Natural killer cell (primary cell): ENCODE measurements at regions of chr16 and their contacts with region 1.

Region 1: DNA sequence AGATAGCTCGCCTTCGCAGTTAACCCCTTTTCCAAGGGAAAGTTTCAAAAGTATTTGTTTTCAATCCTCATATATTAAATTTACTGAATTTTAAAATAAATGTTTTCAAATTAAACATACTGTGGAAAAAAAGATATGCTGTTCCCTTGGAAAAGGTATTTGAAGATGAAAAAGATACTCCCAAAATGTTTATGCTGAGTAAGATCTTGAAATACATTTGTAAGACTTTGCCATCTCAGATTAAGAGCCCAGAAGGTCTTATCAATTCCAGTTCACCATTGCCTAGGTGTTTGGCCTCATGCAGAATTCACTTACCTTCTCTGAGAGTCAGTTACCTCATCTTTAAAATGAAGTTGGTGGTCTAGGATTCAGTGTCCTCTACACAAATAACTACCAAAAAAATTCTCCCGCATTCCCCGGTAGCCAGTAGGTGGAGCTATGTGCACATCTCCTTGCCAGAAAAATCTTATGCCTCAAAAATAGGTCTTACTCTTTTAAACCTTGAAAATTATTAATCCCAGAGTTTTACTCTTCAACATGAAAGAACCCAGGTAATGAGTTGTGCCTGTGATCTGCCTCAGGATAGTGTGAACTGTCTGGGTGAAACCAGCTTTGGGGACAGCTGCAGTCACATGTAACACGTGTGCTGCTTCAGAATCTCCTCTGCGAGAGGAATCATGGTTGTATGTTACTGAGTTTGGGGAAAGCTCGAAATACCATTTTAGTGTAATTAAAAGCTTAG is 178.3 kb downstream of the MRTFB start:
- DNase-seq: peak; percentile 20 to 71
- ATAC-seq: peak in 2 of 3 donors; percentile 38 to 48
- H3K4me3 ChIP-seq: no peak overlapping the region
- H3K4me3 Mint-ChIP-seq: no peak overlapping the region
- H3K27ac ChIP-seq: no peak overlapping the region
- H3K27ac Mint-ChIP-seq: no peak overlapping the region
- H3K4me1 ChIP-seq: no peaks in the 10 kb centered on the region
- H3K4me1 Mint-ChIP-seq: no peaks in the 10 kb centered on the region
- H3K27me3 ChIP-seq: no peaks in the 10 kb centered on the region
- H3K27me3 Mint-ChIP-seq: no peaks in the 10 kb centered on the region
- CTCF ChIP-seq: peak; percentile 77

Region 2: DNA sequence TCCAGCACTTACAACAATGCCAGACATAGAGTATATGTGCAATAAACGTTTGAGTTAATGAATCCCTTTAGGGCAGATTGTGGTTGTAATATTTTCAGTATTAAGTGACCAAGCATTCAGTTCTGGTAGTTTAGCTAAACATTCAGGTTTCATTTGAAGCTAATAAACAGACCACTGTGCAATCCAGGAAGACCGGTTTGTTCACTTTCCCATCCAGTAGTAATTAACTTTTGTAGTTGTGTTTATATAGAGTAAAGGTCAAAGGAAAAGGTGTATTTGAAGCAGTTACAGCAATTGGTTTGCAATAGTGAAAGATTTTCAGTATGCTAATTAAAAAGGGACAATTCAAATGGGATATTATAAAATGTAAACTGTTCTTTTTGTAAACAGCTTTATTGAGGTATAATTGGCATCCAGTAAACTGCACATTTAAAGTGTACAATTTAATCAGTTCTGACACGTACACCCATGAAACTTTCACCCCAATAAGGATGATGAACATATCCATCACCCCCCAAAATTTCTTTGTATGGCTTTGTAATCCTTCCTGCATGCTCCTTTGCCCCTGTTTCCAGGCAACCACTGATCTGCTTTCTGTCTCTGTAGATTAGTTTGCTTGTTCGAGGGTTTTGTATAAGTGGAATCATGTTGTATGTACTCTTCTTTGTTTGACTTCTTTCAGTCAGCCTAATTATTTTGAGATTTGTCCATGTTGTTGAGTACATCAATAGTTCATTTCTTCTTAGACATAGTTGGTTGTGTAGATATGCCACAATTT is 152.1 kb before region 1 on chr16:
- intact Hi-C with region 1: no loop called
- DNase-seq: no peak
- ATAC-seq: no peak
- H3K4me3 ChIP-seq: no peak overlapping the region
- H3K4me3 Mint-ChIP-seq: no peak overlapping the region
- H3K27ac ChIP-seq: no peak overlapping the region
- H3K27ac Mint-ChIP-seq: no peak overlapping the region
- H3K4me1 ChIP-seq: no peaks in the 10 kb centered on the region
- H3K4me1 Mint-ChIP-seq: peaks cover 15 to 16% of the 10 kb centered on the region in 2 donors
- H3K27me3 ChIP-seq: no peaks in the 10 kb centered on the region
- H3K27me3 Mint-ChIP-seq: no peaks in the 10 kb centered on the region
- CTCF ChIP-seq: no peak

Region 3: GRCh38 chr16:14186007-14186794 is 63.3 kb before region 1 on chr16:
- intact Hi-C with region 1: loop called (anchors 10 kb)
- DNase-seq: peak in 1 of 2 donors; percentile 39
- ATAC-seq: no peak
- H3K4me3 ChIP-seq: no peak overlapping the region
- H3K4me3 Mint-ChIP-seq: no peak overlapping the region
- H3K27ac ChIP-seq: no peak overlapping the region
- H3K27ac Mint-ChIP-seq: no peak overlapping the region
- H3K4me1 ChIP-seq: no peaks in the 10 kb centered on the region
- H3K4me1 Mint-ChIP-seq: no peaks in the 10 kb centered on the region
- H3K27me3 ChIP-seq: no peaks in the 10 kb centered on the region
- H3K27me3 Mint-ChIP-seq: no peaks in the 10 kb centered on the region
- CTCF ChIP-seq: no peak

Region 4: GRCh38 chr16:14529010-14529669 is 279.7 kb after region 1 on chr16:
- intact Hi-C with region 1: loop called (anchors 1 kb)
- DNase-seq: peak; percentile 21 to 76
- ATAC-seq: peak; percentile 50 to 56 (median 56)
- H3K4me3 ChIP-seq: no peak overlapping the region
- H3K4me3 Mint-ChIP-seq: no peak overlapping the region
- H3K27ac ChIP-seq: no peak overlapping the region
- H3K27ac Mint-ChIP-seq: no peak overlapping the region
- H3K4me1 ChIP-seq: peaks cover 3% of the 10 kb centered on the region
- H3K4me1 Mint-ChIP-seq: peaks cover 7 to 14% of the 10 kb centered on the region in 2 donors
- H3K27me3 ChIP-seq: no peaks in the 10 kb centered on the region
- H3K27me3 Mint-ChIP-seq: no peaks in the 10 kb centered on the region
- CTCF ChIP-seq: peak; percentile 57

Region 5: DNA sequence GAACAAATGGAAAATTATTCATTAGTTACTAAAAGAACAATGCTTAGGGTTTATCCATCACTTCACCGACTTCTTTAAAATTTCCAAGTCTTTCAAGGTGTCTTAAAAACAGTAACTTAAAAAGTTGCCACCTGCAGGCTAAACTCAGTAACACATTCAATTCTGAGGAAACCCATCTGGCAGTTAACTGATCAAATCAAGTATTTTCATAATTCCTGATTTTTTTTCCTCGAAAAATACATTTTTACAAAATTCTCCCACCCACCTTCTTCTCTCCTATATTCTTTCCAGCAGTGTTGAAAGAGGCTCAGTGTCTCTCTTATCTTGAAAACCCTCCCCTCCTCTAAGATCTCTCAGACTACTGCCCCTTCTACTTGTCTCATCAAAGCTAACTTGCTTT is 350.7 kb after region 1 on chr16:
- intact Hi-C with region 1: loop called (anchors 1 kb)
- DNase-seq: peak in 1 of 2 donors; percentile 40
- ATAC-seq: no peak
- H3K4me3 ChIP-seq: no peak overlapping the region
- H3K4me3 Mint-ChIP-seq: no peak overlapping the region
- H3K27ac ChIP-seq: no peak overlapping the region
- H3K27ac Mint-ChIP-seq: peak overlapping the region in 1 of 2 donors; percentile 56
- H3K4me1 ChIP-seq: no peaks in the 10 kb centered on the region
- H3K4me1 Mint-ChIP-seq: peaks cover 0 to 3% of the 10 kb centered on the region in 2 donors
- H3K27me3 ChIP-seq: no peaks in the 10 kb centered on the region
- H3K27me3 Mint-ChIP-seq: no peaks in the 10 kb centered on the region
- CTCF ChIP-seq: peak; percentile 42